A549 (cell line): ENCODE measurements at regions of chr1 and their contacts with region 1.

Region 1: GRCh38 chr1:113978863-113979702 is at the start of gene OLFML3:
- DNase-seq: peak; percentile 37 to 76
- ATAC-seq: peak; percentile 74 to 86; a peak in 5 of 6 replicates
- H3K4me3 ChIP-seq: no peak within 1 kb of the TSS
- H3K27ac ChIP-seq: peak within 1 kb of the TSS; percentile 50 to 77; a peak in 4 of 6 replicates
- H3K4me1 ChIP-seq: peaks cover 18% of the 10 kb centered on the region
- CTCF ChIP-seq: peak; percentile 65
- EP300 ChIP-seq: no peak
- POLR2A ChIP-seq: no peak
- RAD21 ChIP-seq: peak; percentile 77
- polyA plus RNA-seq, gene OLFML3: 1.2 TPM in 2 replicates

Region 2: GRCh38 chr1:114215436-114215835 is 236.4 kb after region 1 on chr1:
- CTCF ChIA-PET with region 1: interaction called, 13 read pairs
- POLR2A ChIA-PET with region 1: no interaction called
- DNase-seq: no peak
- ATAC-seq: no peak
- H3K4me3 ChIP-seq: no peak overlapping the region
- H3K27ac ChIP-seq: no peak overlapping the region
- H3K4me1 ChIP-seq: no peaks in the 10 kb centered on the region
- CTCF ChIP-seq: no peak
- EP300 ChIP-seq: no peak
- POLR2A ChIP-seq: no peak
- RAD21 ChIP-seq: no peak